Panc1 (cell line): ENCODE measurements at regions of chr12 and their contacts with region 1.

Region 1: GRCh38 chr12:121060149-121061001 is 21.3 kb upstream of the OASL start:
- DNase-seq: peak; percentile 30
- ATAC-seq: peak; percentile 94
- H3K4me3 ChIP-seq: peak overlapping the region; percentile 29 to 49
- H3K27ac ChIP-seq: peak overlapping the region; percentile 65
- H3K4me1 ChIP-seq: peaks cover 4% of the 10 kb centered on the region; the same call in 1 of the 2 replicates
- H3K27me3 ChIP-seq: peaks cover 3% of the 10 kb centered on the region; the same call in 1 of the 2 replicates
- CTCF ChIP-seq: peak; percentile 78

Region 2: GRCh38 chr12:121095544-121096198 is 35.3 kb after region 1 on chr12:
- CTCF ChIA-PET with region 1: interaction called, 3 read pairs
- POLR2A ChIA-PET with region 1: no interaction called
- in situ Hi-C with region 1: no loop called
- intact Hi-C with region 1: loop called (anchors 2 kb)
- DNase-seq: peak; percentile 20
- ATAC-seq: peak; percentile 96
- H3K4me3 ChIP-seq: peak overlapping the region; percentile 23 to 49
- H3K27ac ChIP-seq: no peak overlapping the region
- H3K4me1 ChIP-seq: no peaks in the 10 kb centered on the region; the same call in 1 of the 2 replicates
- H3K27me3 ChIP-seq: peaks cover 5% of the 10 kb centered on the region
- CTCF ChIP-seq: peak; percentile 94

Region 3: DNA sequence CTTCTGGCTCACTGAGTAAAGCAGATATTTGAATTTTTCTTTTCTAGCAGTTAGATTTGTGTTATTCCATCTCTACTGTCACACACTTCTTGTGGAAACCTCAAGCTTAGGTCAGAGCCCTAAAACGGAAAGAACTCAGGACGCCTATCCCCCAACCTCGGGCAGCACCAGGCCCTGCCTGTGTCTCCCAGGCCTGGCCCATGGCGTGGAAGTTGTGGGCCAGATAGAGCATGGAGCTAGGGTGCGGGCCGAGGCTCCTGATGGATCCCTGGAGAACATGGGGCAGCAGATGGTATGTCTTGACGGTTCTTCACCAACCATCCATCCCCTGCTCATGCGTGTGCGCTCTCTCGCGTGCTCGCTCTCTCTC is 170.1 kb after region 1 on chr12:
- CTCF ChIA-PET with region 1: interaction called, 3 read pairs
- POLR2A ChIA-PET with region 1: no interaction called
- in situ Hi-C with region 1: no loop called
- intact Hi-C with region 1: loop called (anchors 1 kb)
- DNase-seq: no peak
- ATAC-seq: peak; percentile 47
- H3K4me3 ChIP-seq: no peak overlapping the region
- H3K27ac ChIP-seq: no peak overlapping the region
- H3K4me1 ChIP-seq: no peaks in the 10 kb centered on the region
- H3K27me3 ChIP-seq: no peaks in the 10 kb centered on the region
- CTCF ChIP-seq: 0 out of 2 replicates have a peak, but pooled peaks have one; percentile 29